Activated B cell treated with CpG ODN at 0.5 μM for 24 hours (primary cell): ENCODE measurements at regions of chr15 and their contacts with region 1.

Region 1: GRCh38 chr15:45378149-45378912 is at the start of gene GATM:
- DNase-seq: peak; percentile 64
- ATAC-seq: peak; percentile 85
- H3K4me3 Mint-ChIP-seq: peak within 1 kb of the TSS; percentile 87
- H3K27ac Mint-ChIP-seq: peak within 1 kb of the TSS; percentile 86
- H3K4me1 Mint-ChIP-seq: peaks cover 25% of the 10 kb centered on the region
- H3K27me3 Mint-ChIP-seq: peaks cover 2% of the 10 kb centered on the region
- CTCF ChIP-seq: no peak
- total RNA-seq, gene GATM: 12.6 and 15.7 TPM in 2 replicates

Region 2: DNA sequence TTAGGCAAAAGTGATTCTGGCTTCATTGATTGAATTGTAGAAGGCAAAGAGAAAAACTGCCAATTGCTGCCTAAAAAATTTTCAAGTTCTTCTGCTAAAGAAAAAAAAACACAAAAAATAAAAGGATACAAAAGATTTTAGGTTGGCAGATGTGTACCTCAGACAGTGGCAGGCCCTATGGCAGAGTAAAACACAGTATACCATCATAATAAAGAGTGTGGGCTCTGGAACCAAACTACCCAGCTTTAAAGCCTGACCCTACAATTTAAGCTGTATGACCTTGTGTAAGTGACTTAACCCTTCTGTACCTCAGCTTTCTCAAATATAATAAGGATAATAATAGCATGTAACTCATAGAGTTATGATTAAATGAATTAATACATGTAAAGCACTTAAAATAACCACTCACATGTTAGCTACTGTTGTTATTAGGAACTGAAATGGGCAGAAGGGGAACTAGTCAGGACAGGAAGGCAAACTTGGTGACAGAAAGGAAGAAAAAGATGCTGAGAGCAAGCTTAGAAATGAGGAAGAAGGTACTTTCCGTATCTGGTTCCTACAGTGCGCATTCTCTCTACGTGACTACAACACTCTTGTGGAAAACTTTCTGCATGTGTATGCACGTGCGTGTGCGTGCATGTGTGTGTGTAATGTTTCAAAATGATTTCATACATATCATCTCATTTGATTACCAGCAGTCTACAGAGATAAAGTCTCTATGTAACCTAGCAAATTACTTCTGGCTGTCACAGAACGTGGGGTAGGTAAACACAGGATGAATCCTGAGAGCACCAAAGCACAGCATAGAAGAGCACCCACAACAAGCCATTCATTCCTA is 13.6 kb after region 1 on chr15:
- CTCF ChIA-PET with region 1: interaction called, 4 read pairs
- POLR2A ChIA-PET with region 1: interaction called, 7 read pairs
- intact Hi-C with region 1: loop called (anchors 1 kb)
- DNase-seq: no peak
- ATAC-seq: peak; percentile 93
- H3K4me3 Mint-ChIP-seq: peak overlapping the region; percentile 30
- H3K27ac Mint-ChIP-seq: peak overlapping the region; percentile 80
- H3K4me1 Mint-ChIP-seq: peaks cover 22% of the 10 kb centered on the region
- H3K27me3 Mint-ChIP-seq: no peaks in the 10 kb centered on the region
- CTCF ChIP-seq: no peak

Region 3: DNA sequence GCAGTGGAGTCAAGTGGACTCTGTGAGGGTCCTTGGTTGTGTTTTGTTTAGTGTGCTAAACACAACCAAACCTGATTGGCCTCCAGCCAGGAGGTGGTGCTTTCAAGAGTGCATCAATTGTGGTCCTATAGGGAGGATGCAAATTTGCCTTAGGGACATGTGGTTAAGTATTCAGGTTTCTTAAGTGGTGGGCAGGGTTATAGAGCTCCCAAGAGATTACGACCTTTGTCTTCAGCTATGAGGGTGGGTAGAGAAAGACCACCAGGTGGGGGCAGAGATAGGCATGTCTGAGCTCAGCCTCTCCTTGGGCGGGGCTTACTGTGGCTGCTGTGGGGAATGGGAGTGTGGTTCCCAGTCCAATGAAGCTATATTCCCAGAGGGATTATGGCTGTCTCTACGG is 443.1 kb after region 1 on chr15:
- CTCF ChIA-PET with region 1: no interaction called
- POLR2A ChIA-PET with region 1: no interaction called
- intact Hi-C with region 1: no loop called
- DNase-seq: no peak
- ATAC-seq: no peak
- H3K4me3 Mint-ChIP-seq: no peak overlapping the region
- H3K27ac Mint-ChIP-seq: no peak overlapping the region
- H3K4me1 Mint-ChIP-seq: no peaks in the 10 kb centered on the region
- H3K27me3 Mint-ChIP-seq: peaks cover 3% of the 10 kb centered on the region
- CTCF ChIP-seq: no peak

Region 4: DNA sequence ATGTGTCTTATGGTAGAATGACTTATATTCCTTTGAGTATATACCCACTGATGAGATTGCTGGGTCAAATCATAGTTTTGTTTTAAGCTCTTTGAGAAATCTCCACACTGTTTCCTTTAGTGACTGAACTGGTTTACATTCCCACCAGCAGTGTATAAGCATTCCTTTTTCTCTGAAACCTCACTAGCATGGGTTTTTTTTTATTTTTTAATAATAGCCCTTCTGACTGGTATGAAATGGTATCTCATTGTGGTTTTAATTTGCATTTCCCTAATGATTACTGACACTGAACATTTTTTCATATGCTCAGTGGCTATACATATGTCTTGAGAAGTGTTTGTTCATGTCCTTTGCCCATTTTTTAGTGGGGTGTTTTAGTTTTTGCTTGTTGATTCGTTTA is 750.8 kb after region 1 on chr15:
- CTCF ChIA-PET with region 1: no interaction called
- POLR2A ChIA-PET with region 1: no interaction called
- intact Hi-C with region 1: no loop called
- DNase-seq: no peak
- ATAC-seq: no peak
- H3K4me3 Mint-ChIP-seq: no peak overlapping the region
- H3K27ac Mint-ChIP-seq: no peak overlapping the region
- H3K4me1 Mint-ChIP-seq: no peaks in the 10 kb centered on the region
- H3K27me3 Mint-ChIP-seq: no peaks in the 10 kb centered on the region
- CTCF ChIP-seq: no peak